ENCODE measurements at regions of chr12 and their contacts with region 1.

Region 1: GRCh38 chr12:8026291-8026900 is 6.1 kb upstream of the FOXJ2 start:
- DNase-seq: peak; percentile 90 to 98 (median 97)
- ATAC-seq: peak; percentile 92 to 96 (median 94)
- H3K4me3 ChIP-seq: peak overlapping the region; percentile 82 to 94
- H3K4me3 Mint-ChIP-seq: peak overlapping the region; percentile 89 to 97 (median 94)
- H3K27ac ChIP-seq: peak overlapping the region; percentile 100
- H3K27ac Mint-ChIP-seq: peak overlapping the region; percentile 97 to 98
- H3K4me1 ChIP-seq: peaks cover 2 to 20% of the 10 kb centered on the region in 2 experiments
- H3K4me1 Mint-ChIP-seq: peaks cover 14 to 19% (median 17%) of the 10 kb centered on the region in 3 donors
- H3K27me3 ChIP-seq: no peaks in the 10 kb centered on the region
- H3K27me3 Mint-ChIP-seq: no peaks in the 10 kb centered on the region

Region 2: DNA sequence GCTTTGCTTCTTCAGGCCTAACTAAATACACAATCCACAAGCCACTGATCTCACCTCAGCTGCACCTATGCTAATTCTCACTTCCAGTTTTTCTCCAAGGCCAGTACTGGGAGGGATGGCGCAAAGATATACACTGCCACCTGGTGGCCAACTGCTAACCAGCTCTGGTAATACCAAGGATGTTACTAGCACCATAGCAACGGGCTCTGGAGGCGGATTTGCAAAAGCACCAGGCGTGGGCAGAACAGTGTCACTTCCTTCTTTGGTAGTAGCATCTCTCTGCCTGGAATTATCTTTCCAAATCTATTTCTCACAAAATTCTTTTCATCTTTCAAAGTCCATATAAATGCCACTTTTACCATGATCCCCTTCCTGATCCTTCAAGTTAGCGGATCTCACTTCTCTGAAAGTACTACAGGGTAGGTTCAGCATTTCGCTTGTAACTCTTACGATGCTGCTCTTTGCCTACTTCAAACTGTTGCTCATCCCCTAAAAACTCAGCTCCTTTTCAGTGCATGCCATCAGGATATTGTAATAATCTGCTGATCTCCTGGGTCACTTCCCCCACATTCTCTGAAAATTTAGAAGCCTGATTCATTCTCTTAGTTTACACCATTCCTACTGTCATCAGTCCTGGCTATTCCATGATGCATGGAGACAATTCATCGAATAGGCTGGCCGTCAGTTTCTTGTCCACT is 31.0 kb before region 1 on chr12:
- CTCF ChIA-PET with region 1: no interaction called
- POLR2A ChIA-PET with region 1: no interaction called
- DNase-seq: peak; percentile 47 to 87 (median 79)
- ATAC-seq: peak; percentile 99 to 100 (median 99)
- H3K4me3 ChIP-seq: no peak overlapping the region
- H3K4me3 Mint-ChIP-seq: no peak overlapping the region
- H3K27ac ChIP-seq: peak overlapping the region; percentile 36
- H3K27ac Mint-ChIP-seq: no peak overlapping the region
- H3K4me1 ChIP-seq: peaks cover 3 to 17% of the 10 kb centered on the region in 2 experiments
- H3K4me1 Mint-ChIP-seq: peaks cover 13 to 19% (median 14%) of the 10 kb centered on the region in 3 donors
- H3K27me3 ChIP-seq: peaks cover 0 to 2% of the 10 kb centered on the region in 2 experiments
- H3K27me3 Mint-ChIP-seq: no peaks in the 10 kb centered on the region

Region 3: DNA sequence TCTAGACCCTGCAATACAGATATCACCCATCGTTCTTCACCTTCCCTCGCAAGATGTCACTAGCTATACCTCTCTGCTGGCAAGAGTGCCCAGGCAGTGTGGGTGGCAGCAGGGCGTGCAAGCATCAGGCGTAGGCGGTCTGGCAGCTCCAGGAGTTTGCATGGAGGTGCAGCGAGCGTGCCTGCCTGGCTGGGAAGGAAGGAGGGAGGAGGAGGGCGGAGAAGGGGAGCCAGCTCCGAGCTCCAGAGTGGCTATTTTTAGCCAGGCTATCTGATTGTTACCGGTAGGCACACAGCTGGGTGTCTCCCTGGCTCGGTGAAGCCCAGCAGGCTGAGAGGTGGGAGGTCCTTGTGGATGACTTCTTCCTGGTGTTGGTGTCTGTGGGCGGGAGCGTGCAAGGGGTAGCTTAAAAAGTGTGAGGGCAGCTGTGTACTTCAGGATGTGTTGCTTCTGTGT is 12.3 kb after region 1 on chr12:
- CTCF ChIA-PET with region 1: interaction called, 6 to 14 read pairs
- POLR2A ChIA-PET with region 1: interaction called in 1 of 2 experiments, 5 read pairs
- DNase-seq: peak in 9 of 35 experiments; percentile 12 to 44 (median 25)
- ATAC-seq: peak; percentile 48 to 66 (median 58)
- H3K4me3 ChIP-seq: peak overlapping the region; percentile 27 to 39
- H3K4me3 Mint-ChIP-seq: peak overlapping the region; percentile 53 to 88 (median 67)
- H3K27ac ChIP-seq: peak overlapping the region; percentile 10
- H3K27ac Mint-ChIP-seq: peak overlapping the region; percentile 68 to 81
- H3K4me1 ChIP-seq: peaks cover 31 to 52% of the 10 kb centered on the region in 2 experiments
- H3K4me1 Mint-ChIP-seq: peaks cover 62 to 67% (median 62%) of the 10 kb centered on the region in 3 donors
- H3K27me3 ChIP-seq: no peaks in the 10 kb centered on the region
- H3K27me3 Mint-ChIP-seq: no peaks in the 10 kb centered on the region

Measured in T-cell (primary cell).